HepG2 (cell line): ENCODE measurements at regions of chr13 and their contacts with region 1.

Region 1: GRCh38 chr13:23871616-23872220 is 17.5 kb downstream of the MIPEP start:
- DNase-seq: peak; percentile 39
- ATAC-seq: no peak
- H3K4me3 ChIP-seq: no peak overlapping the region
- H3K27ac ChIP-seq: no peak overlapping the region
- H3K4me1 ChIP-seq: peaks cover 17% of the 10 kb centered on the region
- H3K27me3 ChIP-seq: no peaks in the 10 kb centered on the region
- CTCF ChIP-seq: peak; percentile 53
- EP300 ChIP-seq: no peak
- POLR2A ChIP-seq: no peak
- RAD21 ChIP-seq: no peak

Region 2: GRCh38 chr13:23888658-23889614 is 17.2 kb after region 1 on chr13 and contains the start of gene MIPEP:
- CTCF ChIA-PET with region 1: interaction called, 10 read pairs
- POLR2A ChIA-PET with region 1: no interaction called
- in situ Hi-C with region 1: no loop called
- intact Hi-C with region 1: no loop called
- DNase-seq: peak; percentile 90
- ATAC-seq: peak; percentile 97
- H3K4me3 ChIP-seq: peak within 1 kb of the TSS; percentile 78 to 100 (median 96)
- H3K27ac ChIP-seq: peak within 1 kb of the TSS; percentile 70
- H3K4me1 ChIP-seq: peaks cover 35% of the 10 kb centered on the region
- H3K27me3 ChIP-seq: no peaks in the 10 kb centered on the region; a peak in 1 of 5 replicates
- CTCF ChIP-seq: peak; percentile 97
- EP300 ChIP-seq: 0 out of 4 replicates have a peak, but pooled peaks of 1 of the 2 experiments have one; percentile 14
- POLR2A ChIP-seq: peak; percentile 39 to 42; a peak in 1 of 4 replicates
- RAD21 ChIP-seq: no peak
- total RNA-seq, gene MIPEP: 24.1 and 24.7 TPM in 2 replicates

Region 3: GRCh38 chr13:23899555-23899954 is 27.8 kb after region 1 on chr13:
- CTCF ChIA-PET with region 1: interaction called, 3 read pairs
- POLR2A ChIA-PET with region 1: no interaction called
- in situ Hi-C with region 1: no loop called
- intact Hi-C with region 1: loop called (anchors 2 kb)
- DNase-seq: peak; percentile 36
- ATAC-seq: peak; percentile 61
- H3K4me3 ChIP-seq: no peak overlapping the region
- H3K27ac ChIP-seq: no peak overlapping the region
- H3K4me1 ChIP-seq: no peaks in the 10 kb centered on the region
- H3K27me3 ChIP-seq: peaks cover 3 to 14% of the 10 kb centered on the region in 2 experiments; a peak in 2 of 5 replicates
- CTCF ChIP-seq: peak; percentile 43; the same call in 1 of the 2 replicates
- EP300 ChIP-seq: no peak
- POLR2A ChIP-seq: no peak
- RAD21 ChIP-seq: no peak